Breast epithelium (tissue), 4 donors: ENCODE measurements at regions of chr2 and their contacts with region 1.

Region 1: DNA sequence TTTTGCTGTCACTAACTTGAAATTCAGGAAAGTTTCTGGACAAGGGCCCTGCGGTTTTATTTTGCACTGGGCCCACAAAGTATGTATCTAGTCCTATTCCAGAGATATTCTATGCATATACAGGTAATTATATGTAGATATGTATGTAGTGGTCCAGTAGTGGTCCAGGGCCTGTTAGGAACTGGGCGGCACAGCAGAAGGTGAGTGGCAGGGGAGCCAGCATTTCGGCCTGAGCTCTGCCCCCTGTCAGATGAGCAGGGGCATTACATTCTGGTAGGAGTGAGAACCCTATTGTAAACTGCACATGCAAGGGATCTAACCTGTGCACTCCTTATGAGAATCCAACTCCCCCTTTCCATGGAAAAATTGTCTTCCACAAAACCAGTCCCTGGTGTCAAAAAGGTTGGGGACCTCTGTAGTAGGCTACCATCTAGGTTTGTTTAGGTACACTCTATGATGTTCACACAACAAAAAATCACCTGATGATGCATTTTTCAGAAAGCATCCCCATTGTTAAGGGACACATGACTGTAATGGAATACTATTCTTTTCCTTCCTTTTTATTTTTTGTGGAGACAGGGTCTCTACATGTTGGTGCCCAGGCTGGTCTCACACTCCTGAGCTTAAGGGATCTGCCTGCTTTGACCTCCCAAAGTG is 2.8 kb upstream of the PPP4R3B start:
- DNase-seq: no peak
- H3K4me3 ChIP-seq: peak overlapping the region in 1 of 3 donors; percentile 27
- H3K27ac ChIP-seq: no peak overlapping the region
- H3K4me1 ChIP-seq: no peaks in the 10 kb centered on the region
- H3K27me3 ChIP-seq: no peaks in the 10 kb centered on the region
- CTCF ChIP-seq: no peak
- POLR2A ChIP-seq: no peak

Region 2: GRCh38 chr2:55056024-55056521 is 564.2 kb before region 1 on chr2:
- intact Hi-C with region 1: loop called (anchors 5 kb)
- DNase-seq: no peak
- H3K4me3 ChIP-seq: no peak overlapping the region
- H3K27ac ChIP-seq: no peak overlapping the region
- H3K4me1 ChIP-seq: peaks cover 0 to 4% of the 10 kb centered on the region in 2 donors
- H3K27me3 ChIP-seq: no peaks in the 10 kb centered on the region
- CTCF ChIP-seq: no peak
- POLR2A ChIP-seq: no peak